Aorta (tissue), 5 donors: ENCODE measurements at regions of chr5 and their contacts with region 1.

Region 1: DNA sequence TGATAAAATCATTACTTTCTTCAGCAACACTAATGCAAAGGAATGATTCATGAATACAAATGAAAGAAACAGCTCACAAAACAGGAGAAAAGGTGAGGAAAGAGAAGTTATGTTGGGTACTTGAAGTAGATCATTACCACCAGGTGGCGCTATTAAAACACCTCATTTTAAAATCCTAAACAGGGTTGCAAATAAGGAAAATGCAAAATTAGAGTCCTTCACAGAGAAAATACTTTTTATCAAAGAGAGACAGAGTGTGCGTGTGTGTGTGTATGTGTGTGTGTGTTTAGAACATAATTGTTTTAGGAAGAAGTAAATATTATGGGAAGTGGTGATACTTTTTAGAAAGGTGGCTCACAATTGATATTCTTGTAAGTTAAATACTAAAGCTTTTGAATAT is 49.5 kb upstream of the CD180 start:
- DNase-seq: no peak
- ATAC-seq: peak; percentile 77
- H3K4me3 ChIP-seq: no peak overlapping the region
- H3K27ac ChIP-seq: peak overlapping the region in 1 of 2 donors; percentile 57
- H3K4me1 ChIP-seq: peaks cover 0 to 1% of the 10 kb centered on the region in 2 donors
- H3K27me3 ChIP-seq: no peaks in the 10 kb centered on the region

Region 2: GRCh38 chr5:67809589-67809988 is 563.5 kb after region 1 on chr5:
- intact Hi-C with region 1: loop called in 1 of 2 experiments (anchors 10 kb)
- DNase-seq: no peak
- ATAC-seq: no peak
- H3K4me3 ChIP-seq: no peak overlapping the region
- H3K27ac ChIP-seq: no peak overlapping the region
- H3K4me1 ChIP-seq: peaks cover 12% of the 10 kb centered on the region in 2 donors
- H3K27me3 ChIP-seq: no peaks in the 10 kb centered on the region

Region 3: DNA sequence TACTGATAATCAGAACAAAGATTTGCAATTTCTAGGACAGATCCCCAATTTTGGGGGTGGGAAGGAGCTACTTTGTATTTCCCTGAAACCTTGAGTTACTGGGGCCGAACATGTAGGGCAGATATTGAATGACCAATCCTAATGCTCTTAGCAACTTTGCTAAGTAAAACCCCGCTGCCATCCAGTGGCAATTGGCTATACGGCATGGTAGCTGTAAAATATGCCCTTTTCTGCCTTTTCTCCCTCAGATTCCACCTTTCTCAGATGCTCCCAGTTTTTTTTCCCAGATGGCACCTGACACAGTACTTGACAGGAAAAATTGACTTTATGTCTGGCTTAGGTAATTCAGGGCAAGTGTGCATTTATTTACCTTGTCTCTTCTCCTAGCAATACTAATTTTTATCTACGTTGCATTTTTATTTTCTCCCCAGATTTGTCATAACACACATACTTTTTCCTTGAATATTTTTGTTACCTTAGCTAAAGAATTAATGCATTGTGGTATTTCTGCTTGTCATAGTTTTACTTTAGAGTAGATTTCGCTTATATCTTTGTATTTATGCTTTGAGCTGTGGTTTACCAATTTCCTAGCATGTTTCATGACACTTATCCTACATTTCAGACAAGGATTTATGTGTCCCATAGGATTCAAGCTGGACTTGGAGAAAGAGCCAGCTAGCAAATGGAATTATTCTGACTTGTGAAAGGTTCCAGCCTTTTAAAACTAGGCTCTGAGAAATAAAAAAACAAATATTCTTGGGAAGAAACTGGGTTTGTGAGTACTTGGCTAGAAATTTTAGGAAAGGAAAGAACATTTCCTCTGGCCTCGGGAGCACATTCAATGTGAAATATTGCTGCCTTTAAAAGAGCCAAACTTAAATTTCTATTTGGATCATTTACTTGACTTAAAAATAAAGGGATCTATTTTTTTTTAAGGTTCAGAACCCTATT is 1006.8 kb after region 1 on chr5:
- intact Hi-C with region 1: loop called (anchors 1 to 5 kb)
- DNase-seq: peak in 1 of 2 donors; percentile 63
- ATAC-seq: peak; percentile 79
- H3K4me3 ChIP-seq: peak overlapping the region in 1 of 2 donors; percentile 3
- H3K27ac ChIP-seq: peak overlapping the region; percentile 48 to 57
- H3K4me1 ChIP-seq: peaks cover 6 to 28% of the 10 kb centered on the region in 2 donors
- H3K27me3 ChIP-seq: no peaks in the 10 kb centered on the region

Region 4: DNA sequence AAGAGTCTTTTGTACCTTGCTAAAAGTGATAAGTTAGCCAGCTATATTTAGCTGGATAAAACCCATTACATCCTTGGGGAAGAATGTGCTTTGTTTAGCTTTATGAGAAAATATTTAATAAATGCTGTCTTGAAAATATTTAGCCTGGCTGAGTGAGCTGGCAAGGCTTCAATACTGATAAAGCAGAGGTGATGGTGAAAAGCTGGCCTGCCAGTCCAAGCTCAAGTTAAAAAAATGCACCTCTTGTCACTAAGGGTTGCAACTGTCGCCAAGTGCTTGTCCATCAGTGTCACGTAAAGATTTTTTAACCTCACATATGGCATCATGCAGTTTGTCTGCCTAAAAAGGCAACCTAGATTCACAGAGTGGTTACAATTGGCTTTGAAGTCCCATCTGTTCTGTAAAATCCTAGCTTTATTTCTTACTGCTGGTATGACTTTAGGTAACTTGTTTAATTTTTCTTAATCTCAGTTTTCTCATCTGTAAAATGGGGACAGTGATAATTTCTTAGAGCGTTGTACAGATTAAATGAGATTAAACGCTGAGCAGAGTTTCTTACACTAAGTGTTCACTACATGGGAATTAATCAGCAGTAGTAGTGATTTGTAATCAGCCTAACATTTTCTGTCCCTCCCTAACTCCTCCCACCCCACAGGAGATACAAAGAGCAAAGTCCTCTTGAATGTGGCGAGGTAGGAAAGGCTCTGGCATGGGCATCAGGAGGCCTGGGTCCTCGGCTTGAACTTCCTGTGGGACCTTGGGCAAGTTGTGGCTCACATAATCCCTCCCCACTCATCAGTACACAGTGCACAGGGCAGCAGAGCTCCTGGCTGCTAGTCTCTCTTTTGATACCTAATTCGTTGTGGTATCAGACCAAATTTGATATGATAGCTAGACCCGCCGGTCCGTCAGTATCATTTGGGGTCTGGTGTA is 1018.2 kb after region 1 on chr5:
- intact Hi-C with region 1: loop called in 1 of 2 experiments (anchors 5 kb)
- DNase-seq: no peak
- ATAC-seq: peak; percentile 33
- H3K4me3 ChIP-seq: no peak overlapping the region
- H3K27ac ChIP-seq: peak overlapping the region; percentile 64 to 80
- H3K4me1 ChIP-seq: peaks cover 8 to 17% of the 10 kb centered on the region in 2 donors
- H3K27me3 ChIP-seq: no peaks in the 10 kb centered on the region

Region 5: GRCh38 chr5:68962757-68963484 is 1716.8 kb after region 1 on chr5:
- intact Hi-C with region 1: loop called in 1 of 2 experiments (anchors 10 kb)
- DNase-seq: peak; percentile 62 to 80
- ATAC-seq: peak; percentile 86
- H3K4me3 ChIP-seq: no peak overlapping the region
- H3K27ac ChIP-seq: no peak overlapping the region
- H3K4me1 ChIP-seq: no peaks in the 10 kb centered on the region
- H3K27me3 ChIP-seq: no peaks in the 10 kb centered on the region